ENCODE measurements at regions of chr12 and their contacts with region 1.

Region 1: DNA sequence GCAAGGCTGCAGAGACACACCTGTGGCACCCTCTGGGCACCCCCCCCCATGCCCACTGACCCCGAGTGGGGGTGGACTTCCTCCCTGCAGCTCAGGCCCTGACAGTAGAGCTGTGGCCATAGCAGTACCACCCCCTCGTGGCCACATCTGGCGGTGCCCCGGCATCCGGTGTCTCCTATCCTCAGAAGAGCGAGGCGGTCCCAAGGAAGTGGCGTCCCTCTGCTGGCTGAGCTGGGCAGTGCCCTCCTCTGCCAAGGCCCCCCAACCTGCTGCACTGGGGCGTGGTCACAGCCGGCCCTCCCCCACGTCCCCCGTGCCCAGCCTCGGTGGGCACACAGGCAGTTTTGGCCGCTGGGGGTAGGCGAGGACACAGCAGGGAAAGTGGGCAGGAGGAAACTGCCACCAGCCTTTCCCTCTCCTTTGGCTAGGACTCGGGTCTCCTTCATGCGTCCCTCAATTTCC is 6.0 kb upstream of the SLC6A12 start:
- DNase-seq: peak; percentile 71
- CTCF ChIP-seq: peak; percentile 74

Region 2: DNA sequence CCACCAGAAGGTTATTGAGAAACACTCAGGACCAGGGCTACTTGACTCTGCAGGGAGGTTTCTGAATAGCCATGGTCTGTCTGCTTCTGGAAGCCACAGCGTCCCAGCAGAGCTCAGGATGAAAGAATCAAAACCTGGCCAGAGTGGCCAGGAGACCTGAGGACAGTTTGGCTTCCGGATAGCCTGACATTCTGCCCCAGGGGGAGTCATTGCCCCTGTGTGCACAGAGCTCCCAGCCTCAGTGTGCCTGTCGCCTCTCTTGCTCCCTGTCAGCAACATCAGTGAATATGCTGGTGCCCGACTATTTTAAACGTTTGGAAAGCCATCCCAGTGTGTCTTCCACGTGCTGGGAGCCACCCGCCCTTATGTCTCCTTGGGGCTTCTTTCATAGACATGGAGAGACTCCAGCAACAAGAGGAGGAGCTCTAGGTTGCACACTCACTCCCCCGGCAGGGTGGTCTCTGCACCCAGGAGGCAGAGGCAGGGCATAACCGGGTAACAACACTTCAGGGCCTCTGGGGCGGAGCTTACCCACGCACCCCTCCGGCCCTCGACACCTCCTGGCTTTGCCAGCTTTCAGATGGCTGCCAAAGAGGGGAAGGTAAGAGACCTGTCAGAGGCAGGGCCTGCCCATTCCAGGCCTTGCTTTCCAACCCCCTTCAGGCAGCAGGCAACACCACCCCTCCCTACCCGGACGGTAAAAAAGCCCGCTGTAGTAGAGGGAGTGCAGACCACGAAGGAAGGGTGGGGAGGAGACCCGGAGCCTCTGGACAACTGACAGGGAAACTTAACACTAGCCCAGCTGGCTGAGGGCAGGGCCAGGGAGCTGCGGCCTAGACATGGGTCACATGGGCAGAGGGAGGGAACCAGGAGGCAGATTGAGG is 13.1 kb after region 1 on chr12:
- CTCF ChIA-PET with region 1: interaction called, 24 read pairs
- POLR2A ChIA-PET with region 1: no interaction called
- DNase-seq: no peak
- CTCF ChIP-seq: no peak

Measured in GM10248 (cell line).